ENCODE measurements at regions of chr9 and their contacts with region 1.

Region 1: DNA sequence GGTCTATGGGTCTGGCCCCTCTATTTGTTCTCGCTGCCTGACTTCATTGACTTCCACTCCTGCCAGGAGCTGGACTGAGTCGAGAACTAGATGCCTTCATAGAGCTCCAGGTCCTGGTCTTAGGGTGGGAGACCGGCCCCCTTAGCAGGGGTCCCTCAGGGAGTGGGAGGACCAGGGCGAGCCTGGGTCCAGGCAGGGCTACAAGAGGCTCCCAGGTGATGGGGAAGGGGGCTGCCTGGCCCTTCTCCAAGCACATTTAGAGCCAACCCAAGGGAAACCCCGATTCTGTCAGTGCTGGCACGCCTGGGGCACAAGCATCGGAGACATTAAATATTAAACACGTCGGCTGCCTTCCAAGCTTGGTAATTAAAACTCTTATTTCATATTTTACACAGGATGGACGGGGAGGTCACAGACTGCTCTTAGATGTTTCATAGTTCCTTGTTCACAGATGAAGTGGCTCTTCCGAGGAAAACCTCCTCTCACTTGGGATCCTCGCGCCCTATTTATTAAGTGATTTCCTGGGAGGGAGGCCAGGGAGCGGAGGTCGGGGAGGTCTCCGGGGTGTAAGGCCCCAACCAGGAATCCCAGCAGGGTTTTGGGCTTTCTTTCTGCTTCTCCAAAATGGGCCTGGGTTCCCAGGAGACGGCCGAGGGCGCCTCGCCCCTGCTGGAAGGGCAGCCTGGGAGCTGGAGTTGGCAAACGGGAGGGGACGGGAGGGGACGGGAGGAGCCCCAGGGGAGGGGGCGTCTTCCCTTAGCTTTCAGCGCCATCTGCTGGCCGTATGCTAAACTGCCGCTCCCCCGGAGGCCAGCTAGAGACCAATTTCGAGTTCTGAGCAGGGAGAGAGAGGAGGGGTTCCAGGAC is 23.4 kb upstream of the ZBTB43 start:
- DNase-seq: peak; percentile 59
- ATAC-seq: peak; percentile 100
- H3K4me3 ChIP-seq: no peak overlapping the region
- H3K27ac ChIP-seq: no peak overlapping the region
- H3K4me1 ChIP-seq: no peaks in the 10 kb centered on the region
- H3K27me3 ChIP-seq: peaks cover 29% of the 10 kb centered on the region
- CTCF ChIP-seq: peak; percentile 92
- POLR2A ChIP-seq: 0 out of 2 replicates have a peak, but pooled peaks have one; percentile 29
- RAD21 ChIP-seq: peak; percentile 94

Region 2: DNA sequence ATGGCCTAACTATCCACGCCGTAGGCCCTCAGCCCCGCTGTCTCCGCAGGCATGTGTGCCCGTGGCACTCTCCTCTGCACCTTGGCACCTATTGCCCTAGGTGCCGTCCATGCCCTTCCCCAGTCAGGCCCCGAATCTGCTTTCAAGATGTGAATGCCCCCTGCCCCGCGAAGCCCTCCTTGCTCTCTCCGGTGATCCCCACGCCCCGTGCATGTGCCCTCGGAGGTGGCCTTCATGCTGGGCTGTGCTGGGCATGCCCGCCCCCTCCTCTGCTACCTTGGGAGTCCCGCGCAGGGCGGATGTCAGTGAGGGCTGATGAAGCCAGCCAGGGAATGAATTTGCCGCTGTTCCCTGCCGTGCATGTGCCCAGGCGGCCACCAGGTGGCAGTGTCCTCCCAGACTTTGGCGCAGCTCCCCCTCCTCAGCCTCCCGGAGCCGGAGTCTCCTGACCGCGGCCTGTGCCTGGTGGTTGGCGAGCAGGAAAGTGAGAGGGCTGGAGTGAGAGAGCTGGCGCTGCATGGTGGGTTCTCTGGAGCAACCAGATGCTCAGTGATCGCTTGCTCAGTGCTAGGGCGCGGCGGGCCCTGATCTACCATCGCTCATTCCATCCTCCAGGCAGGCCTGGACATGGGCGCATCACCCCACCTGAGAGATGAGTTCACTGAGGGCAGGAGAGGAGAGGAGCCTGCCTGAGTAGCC is 280.6 kb before region 1 on chr9:
- CTCF ChIA-PET with region 1: interaction called, 4 read pairs
- POLR2A ChIA-PET with region 1: no interaction called
- dilution Hi-C with region 1: no loop called
- in situ Hi-C with region 1: no loop called
- intact Hi-C with region 1: loop called (anchors 1 kb)
- DNase-seq: peak; percentile 70
- ATAC-seq: peak; percentile 79
- H3K4me3 ChIP-seq: no peak overlapping the region
- H3K27ac ChIP-seq: no peak overlapping the region
- H3K4me1 ChIP-seq: peaks cover 4% of the 10 kb centered on the region; the same call in 1 of the 2 replicates
- H3K27me3 ChIP-seq: no peaks in the 10 kb centered on the region; the same call in 1 of the 2 replicates
- CTCF ChIP-seq: peak; percentile 96
- POLR2A ChIP-seq: no peak
- RAD21 ChIP-seq: peak; percentile 88

Region 3: GRCh38 chr9:126599047-126599650 is 182.3 kb before region 1 on chr9:
- CTCF ChIA-PET with region 1: no interaction called
- POLR2A ChIA-PET with region 1: no interaction called
- dilution Hi-C with region 1: no loop called
- in situ Hi-C with region 1: no loop called
- intact Hi-C with region 1: loop called (anchors 5 kb)
- DNase-seq: no peak
- ATAC-seq: no peak
- H3K4me3 ChIP-seq: no peak overlapping the region
- H3K27ac ChIP-seq: no peak overlapping the region
- H3K4me1 ChIP-seq: no peaks in the 10 kb centered on the region
- H3K27me3 ChIP-seq: peaks cover 23% of the 10 kb centered on the region
- CTCF ChIP-seq: 0 out of 2 replicates have a peak, but pooled peaks have one; percentile 5
- POLR2A ChIP-seq: no peak
- RAD21 ChIP-seq: no peak

Region 4: GRCh38 chr9:126611592-126612325 is 169.7 kb before region 1 on chr9:
- CTCF ChIA-PET with region 1: interaction called, 4 read pairs
- POLR2A ChIA-PET with region 1: no interaction called
- dilution Hi-C with region 1: no loop called
- in situ Hi-C with region 1: loop called (anchors 5 kb)
- intact Hi-C with region 1: loop called (anchors 1 kb)
- DNase-seq: peak; percentile 40
- ATAC-seq: peak; percentile 95
- H3K4me3 ChIP-seq: no peak overlapping the region
- H3K27ac ChIP-seq: no peak overlapping the region
- H3K4me1 ChIP-seq: no peaks in the 10 kb centered on the region
- H3K27me3 ChIP-seq: peaks cover 93% of the 10 kb centered on the region
- CTCF ChIP-seq: peak; percentile 67
- POLR2A ChIP-seq: no peak
- RAD21 ChIP-seq: peak; percentile 60

Region 5: GRCh38 chr9:126704873-126705766 is 76.3 kb before region 1 on chr9:
- CTCF ChIA-PET with region 1: interaction called, 15 read pairs
- POLR2A ChIA-PET with region 1: interaction called, 3 read pairs
- dilution Hi-C with region 1: no loop called
- in situ Hi-C with region 1: loop called (anchors 5 kb)
- intact Hi-C with region 1: loop called (anchors 1 kb)
- DNase-seq: peak; percentile 38
- ATAC-seq: peak; percentile 90
- H3K4me3 ChIP-seq: no peak overlapping the region
- H3K27ac ChIP-seq: no peak overlapping the region
- H3K4me1 ChIP-seq: no peaks in the 10 kb centered on the region; the same call in 1 of the 2 replicates
- H3K27me3 ChIP-seq: peaks cover 52% of the 10 kb centered on the region
- CTCF ChIP-seq: peak; percentile 78
- POLR2A ChIP-seq: no peak
- RAD21 ChIP-seq: peak; percentile 52

Region 6: GRCh38 chr9:127122176-127123063 is 341.0 kb after region 1 on chr9 and contains the start of gene ANGPTL2:
- CTCF ChIA-PET with region 1: no interaction called
- POLR2A ChIA-PET with region 1: no interaction called
- dilution Hi-C with region 1: no loop called
- in situ Hi-C with region 1: no loop called
- intact Hi-C with region 1: no loop called
- DNase-seq: peak; percentile 95
- ATAC-seq: peak; percentile 92
- H3K4me3 ChIP-seq: peak within 1 kb of the TSS; percentile 69
- H3K27ac ChIP-seq: peak within 1 kb of the TSS; percentile 83
- H3K4me1 ChIP-seq: peaks cover 27% of the 10 kb centered on the region
- H3K27me3 ChIP-seq: no peaks in the 10 kb centered on the region
- CTCF ChIP-seq: no peak
- POLR2A ChIP-seq: peak; percentile 94
- RAD21 ChIP-seq: peak; percentile 3
- total RNA-seq, gene ANGPTL2: 9.5 and 14.7 TPM in 2 replicates